ENCODE measurements at regions of chr1 and their contacts with region 1.

Region 1: DNA sequence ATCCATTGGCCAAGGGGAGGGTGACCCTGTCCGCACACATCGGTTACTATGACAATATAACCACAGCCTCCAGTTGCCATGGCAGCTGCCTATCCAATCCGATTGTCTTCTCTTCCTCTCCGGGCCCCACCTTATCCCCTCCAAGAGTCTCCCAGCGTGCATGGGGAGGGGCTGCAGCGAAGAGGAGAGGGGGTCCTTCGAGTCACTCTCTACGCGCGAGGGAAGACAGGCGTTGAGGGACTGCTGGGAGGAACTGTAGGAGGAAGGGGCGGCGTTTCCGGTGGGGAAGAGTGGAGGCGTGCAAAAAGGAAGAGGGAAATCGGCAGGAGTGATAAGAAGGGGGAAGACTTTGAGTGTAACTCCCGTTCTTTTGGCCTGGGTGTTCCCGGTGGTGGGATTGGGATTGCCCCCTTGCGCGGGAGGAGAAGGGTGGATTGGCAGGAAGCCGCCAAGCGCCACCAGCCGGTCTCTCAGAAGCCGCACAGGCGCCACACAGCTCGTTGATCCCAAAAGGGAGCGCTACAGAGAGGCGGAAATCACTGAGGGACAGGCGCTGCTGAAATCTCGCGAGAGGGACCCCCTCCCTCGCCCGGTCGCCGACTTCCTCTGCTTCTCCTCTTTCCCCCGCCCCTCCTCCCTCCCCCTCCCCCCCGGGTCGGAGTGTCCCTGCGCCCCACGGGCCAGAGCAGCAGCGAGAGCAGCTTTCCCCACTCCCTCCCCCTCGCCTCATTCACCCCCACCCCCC is 384 bp upstream of the SMG7 start:
- DNase-seq: peak; percentile 97
- H3K4me3 Mint-ChIP-seq: peak overlapping the region; percentile 92
- H3K27ac Mint-ChIP-seq: peak overlapping the region; percentile 100
- H3K4me1 Mint-ChIP-seq: peaks cover 29% of the 10 kb centered on the region
- H3K27me3 Mint-ChIP-seq: no peaks in the 10 kb centered on the region

Region 2: GRCh38 chr1:182604169-182605164 is 867.4 kb before region 1 on chr1 and contains the start of gene RGS16:
- intact Hi-C with region 1: loop called (anchors 2 kb)
- DNase-seq: peak; percentile 98
- H3K4me3 Mint-ChIP-seq: no peak within 1 kb of the TSS
- H3K27ac Mint-ChIP-seq: no peak within 1 kb of the TSS
- H3K4me1 Mint-ChIP-seq: peaks cover 45% of the 10 kb centered on the region
- H3K27me3 Mint-ChIP-seq: peaks cover 2% of the 10 kb centered on the region
- total RNA-seq, gene RGS16: 94.3 and 94.7 TPM in 2 replicates

Region 3: DNA sequence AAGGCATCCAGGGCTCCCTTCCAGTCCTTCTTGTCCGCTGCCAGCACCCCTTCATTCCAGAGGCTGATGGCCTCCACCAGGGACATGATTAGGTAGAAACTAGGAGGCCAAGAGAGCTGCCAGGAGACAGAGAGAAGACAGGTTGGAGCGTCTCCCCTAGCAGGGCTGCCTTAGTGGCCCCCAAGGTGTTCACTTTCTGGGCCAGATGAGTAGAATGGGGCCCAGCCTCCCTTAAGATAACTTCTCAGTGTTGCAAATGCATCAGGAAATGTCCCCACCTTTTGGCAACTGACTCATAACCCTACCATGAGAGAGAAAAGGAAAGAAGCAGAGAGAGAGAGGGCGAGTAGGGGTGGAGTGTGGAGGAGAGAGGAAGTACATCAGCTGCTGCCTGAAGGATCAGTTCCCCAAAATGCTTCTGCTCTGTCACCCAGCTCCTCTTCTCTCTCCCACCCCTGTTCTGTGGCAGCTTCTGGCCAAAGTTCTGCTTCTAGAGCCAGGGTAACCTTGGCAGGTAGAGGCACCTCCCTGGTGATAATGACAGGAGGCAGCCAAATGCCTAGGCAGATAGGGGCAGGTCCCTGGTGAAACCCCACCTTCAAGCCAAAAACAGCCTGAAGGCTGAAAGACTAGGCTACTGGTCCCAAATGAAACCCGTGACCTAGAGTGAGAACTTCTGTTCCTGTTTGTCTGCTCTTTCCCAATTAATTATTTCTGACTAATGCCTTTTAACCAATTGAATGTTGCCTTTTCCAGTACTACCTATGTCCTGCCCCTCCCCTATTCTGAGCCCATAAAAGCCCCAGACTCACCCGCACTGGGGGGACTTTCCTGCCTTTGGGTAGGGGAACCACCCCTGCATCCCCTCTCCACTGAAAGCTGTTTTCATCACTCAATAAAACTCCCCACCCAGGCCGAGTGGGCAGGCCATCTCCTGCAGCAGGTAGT is 118.6 kb after region 1 on chr1 and contains the start of gene NCF2:
- intact Hi-C with region 1: loop called (anchors 1 kb)
- DNase-seq: peak; percentile 89
- H3K4me3 Mint-ChIP-seq: peak within 1 kb of the TSS; percentile 63
- H3K27ac Mint-ChIP-seq: peak within 1 kb of the TSS; percentile 75
- H3K4me1 Mint-ChIP-seq: peaks cover 44% of the 10 kb centered on the region
- H3K27me3 Mint-ChIP-seq: no peaks in the 10 kb centered on the region
- total RNA-seq, gene NCF2: 5.3 and 6.2 TPM in 2 replicates

Region 4: GRCh38 chr1:183685112-183685713 is 213.3 kb after region 1 on chr1:
- intact Hi-C with region 1: loop called (anchors 2 kb)
- DNase-seq: peak; percentile 78
- H3K4me3 Mint-ChIP-seq: no peak overlapping the region
- H3K27ac Mint-ChIP-seq: no peak overlapping the region
- H3K4me1 Mint-ChIP-seq: peaks cover 11% of the 10 kb centered on the region
- H3K27me3 Mint-ChIP-seq: peaks cover 30% of the 10 kb centered on the region

Region 5: GRCh38 chr1:184051485-184052193 is 579.7 kb after region 1 on chr1 and contains the start of gene TSEN15:
- intact Hi-C with region 1: loop called (anchors 1 kb)
- DNase-seq: peak; percentile 93
- H3K4me3 Mint-ChIP-seq: peak within 1 kb of the TSS; percentile 96
- H3K27ac Mint-ChIP-seq: peak within 1 kb of the TSS; percentile 98
- H3K4me1 Mint-ChIP-seq: peaks cover 30% of the 10 kb centered on the region
- H3K27me3 Mint-ChIP-seq: peaks cover 25% of the 10 kb centered on the region
- total RNA-seq, gene TSEN15: 44.9 and 48.3 TPM in 2 replicates

Region 6: GRCh38 chr1:184754476-184755225 is 1282.7 kb after region 1 on chr1 and contains the start of gene EDEM3:
- intact Hi-C with region 1: loop called (anchors 10 kb)
- DNase-seq: peak; percentile 99
- H3K4me3 Mint-ChIP-seq: peak within 1 kb of the TSS; percentile 98
- H3K27ac Mint-ChIP-seq: peak within 1 kb of the TSS; percentile 96
- H3K4me1 Mint-ChIP-seq: peaks cover 23% of the 10 kb centered on the region
- H3K27me3 Mint-ChIP-seq: peaks cover 7% of the 10 kb centered on the region
- total RNA-seq, gene EDEM3: 23.6 and 28.3 TPM in 2 replicates

Measured in activated CD4-positive, alpha-beta T cell treated with anti-CD3 and anti-CD28 coated beads, Interleukin-2, amount 10 ng/mL, durations not matched to agents 24 days and 14 days (primary cell).